ENCODE measurements at regions of chr12 and their contacts with region 1.

Region 1: DNA sequence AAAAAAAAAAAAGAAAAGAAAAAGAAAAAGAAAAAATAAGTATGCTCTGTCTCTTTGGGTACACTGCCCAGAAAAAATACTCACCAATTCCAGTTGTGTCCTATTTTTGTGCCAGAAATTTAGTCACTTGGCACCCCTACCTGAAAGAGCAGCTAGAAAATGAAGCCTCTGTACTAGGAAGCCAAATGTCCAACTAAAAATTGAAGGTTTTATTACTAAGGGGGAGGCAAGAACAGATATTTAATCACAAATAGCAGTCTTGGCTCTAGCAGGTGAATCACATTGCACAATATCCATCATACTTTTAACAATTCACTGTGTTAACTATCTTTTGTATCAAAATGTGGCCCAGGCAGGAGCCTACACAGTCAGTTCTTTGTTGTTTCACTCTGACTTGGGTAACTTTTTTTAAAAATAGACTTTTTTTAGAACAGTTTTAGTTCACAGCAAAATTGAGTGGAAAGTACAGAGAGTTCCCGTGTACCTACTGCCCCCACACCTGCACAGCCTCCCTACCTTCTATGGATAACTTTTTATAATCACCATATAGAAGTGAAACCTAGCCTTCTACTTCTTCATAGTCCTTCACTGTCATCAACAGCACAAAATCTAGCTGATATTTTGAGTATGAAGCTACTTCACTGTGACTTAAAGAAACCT is 87.1 kb upstream of the ATF7IP start:
- DNase-seq: peak; percentile 79
- H3K4me3 ChIP-seq: peak overlapping the region; percentile 5
- H3K27ac ChIP-seq: peak overlapping the region; percentile 95
- H3K4me1 ChIP-seq: peaks cover 88% of the 10 kb centered on the region
- CTCF ChIP-seq: no peak

Region 2: GRCh38 chr12:14264316-14264715 is 14.1 kb before region 1 on chr12:
- CTCF ChIA-PET with region 1: interaction called, 4 read pairs
- POLR2A ChIA-PET with region 1: interaction called, 69 read pairs
- intact Hi-C with region 1: no loop called
- DNase-seq: no peak
- H3K4me3 ChIP-seq: no peak overlapping the region
- H3K27ac ChIP-seq: no peak overlapping the region
- H3K4me1 ChIP-seq: peaks cover 31% of the 10 kb centered on the region
- CTCF ChIP-seq: no peak

Region 3: DNA sequence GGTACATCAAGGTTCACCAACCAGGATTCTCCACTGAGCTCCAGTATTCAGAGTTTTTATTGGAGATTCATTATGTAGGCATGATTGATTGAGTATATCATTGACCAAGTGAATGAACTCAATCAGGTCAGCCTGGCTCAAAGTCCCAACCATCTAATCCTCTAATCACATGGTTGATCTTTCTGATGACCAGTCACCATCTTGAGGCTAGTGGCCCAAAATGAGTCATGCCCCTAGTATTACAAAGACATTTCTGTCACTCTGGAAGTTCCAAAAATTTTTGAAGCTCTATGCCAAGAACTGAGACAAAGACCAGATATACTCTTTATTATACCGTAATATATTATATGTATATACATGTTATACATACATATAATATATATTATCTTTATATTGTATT is 11.2 kb after region 1 on chr12:
- CTCF ChIA-PET with region 1: interaction called, 8 read pairs
- POLR2A ChIA-PET with region 1: interaction called, 29 read pairs
- intact Hi-C with region 1: no loop called
- DNase-seq: no peak
- H3K4me3 ChIP-seq: no peak overlapping the region
- H3K27ac ChIP-seq: no peak overlapping the region
- H3K4me1 ChIP-seq: peaks cover 19% of the 10 kb centered on the region
- CTCF ChIP-seq: no peak

Measured in OCI-LY7 (cell line).